ENCODE measurements at regions of chr15 and their contacts with region 1.

Region 1: DNA sequence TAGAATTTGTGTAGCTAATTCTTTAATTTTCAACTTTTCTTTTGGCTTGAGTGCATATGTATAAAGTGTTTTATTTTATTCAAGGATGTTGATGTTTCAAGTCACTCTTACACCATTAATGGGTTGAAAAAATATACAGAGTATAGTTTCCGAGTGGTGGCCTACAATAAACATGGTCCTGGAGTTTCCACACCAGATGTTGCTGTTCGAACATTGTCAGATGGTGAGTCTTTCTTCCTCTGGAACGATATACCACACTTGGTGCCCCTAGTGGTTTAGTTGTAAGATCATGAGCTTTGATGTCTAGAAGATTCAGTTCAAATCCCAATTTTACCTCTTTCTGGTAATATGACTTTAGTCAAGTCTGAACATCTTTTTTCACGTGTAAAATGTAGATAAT is 119.3 kb downstream of the HCN4 start:
- DNase-seq: no peak
- ATAC-seq: no peak
- H3K4me3 Mint-ChIP-seq: no peak overlapping the region
- H3K27ac Mint-ChIP-seq: no peak overlapping the region
- H3K4me1 Mint-ChIP-seq: no peaks in the 10 kb centered on the region
- H3K27me3 Mint-ChIP-seq: peaks cover 3% of the 10 kb centered on the region

Region 2: DNA sequence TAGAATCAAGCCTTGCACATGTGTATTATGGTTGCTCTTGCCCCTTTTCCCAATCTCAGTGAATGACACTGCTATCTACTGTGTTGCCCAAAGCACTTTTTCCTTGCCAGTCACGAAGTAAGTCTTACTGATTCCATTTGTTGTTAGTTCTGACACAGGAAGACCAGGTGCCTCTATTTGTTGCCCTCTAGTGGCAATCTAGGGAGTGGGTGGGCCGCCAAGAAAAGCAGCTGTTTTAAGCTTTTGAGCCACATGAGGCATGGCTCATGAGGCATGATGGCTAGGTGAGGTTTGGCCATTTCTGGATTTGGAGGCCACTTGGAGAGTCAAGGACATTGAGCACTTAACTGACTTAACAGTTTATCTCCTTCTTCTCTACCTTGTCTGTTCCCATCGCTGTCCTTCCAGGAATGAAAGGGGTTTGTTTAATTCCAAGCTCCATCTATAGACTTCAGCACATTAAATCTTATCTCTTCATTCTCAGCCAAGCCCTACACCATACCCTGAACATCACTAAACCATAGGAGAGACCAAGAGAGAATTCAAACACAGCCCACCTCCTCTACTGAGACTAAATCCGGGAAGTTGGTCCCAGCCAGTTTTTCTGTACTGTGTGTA is 16.1 kb after region 1 on chr15:
- CTCF ChIA-PET with region 1: interaction called, 110 read pairs
- DNase-seq: peak; percentile 74
- ATAC-seq: peak; percentile 75
- H3K4me3 Mint-ChIP-seq: no peak overlapping the region
- H3K27ac Mint-ChIP-seq: no peak overlapping the region
- H3K4me1 Mint-ChIP-seq: no peaks in the 10 kb centered on the region
- H3K27me3 Mint-ChIP-seq: no peaks in the 10 kb centered on the region

Region 3: DNA sequence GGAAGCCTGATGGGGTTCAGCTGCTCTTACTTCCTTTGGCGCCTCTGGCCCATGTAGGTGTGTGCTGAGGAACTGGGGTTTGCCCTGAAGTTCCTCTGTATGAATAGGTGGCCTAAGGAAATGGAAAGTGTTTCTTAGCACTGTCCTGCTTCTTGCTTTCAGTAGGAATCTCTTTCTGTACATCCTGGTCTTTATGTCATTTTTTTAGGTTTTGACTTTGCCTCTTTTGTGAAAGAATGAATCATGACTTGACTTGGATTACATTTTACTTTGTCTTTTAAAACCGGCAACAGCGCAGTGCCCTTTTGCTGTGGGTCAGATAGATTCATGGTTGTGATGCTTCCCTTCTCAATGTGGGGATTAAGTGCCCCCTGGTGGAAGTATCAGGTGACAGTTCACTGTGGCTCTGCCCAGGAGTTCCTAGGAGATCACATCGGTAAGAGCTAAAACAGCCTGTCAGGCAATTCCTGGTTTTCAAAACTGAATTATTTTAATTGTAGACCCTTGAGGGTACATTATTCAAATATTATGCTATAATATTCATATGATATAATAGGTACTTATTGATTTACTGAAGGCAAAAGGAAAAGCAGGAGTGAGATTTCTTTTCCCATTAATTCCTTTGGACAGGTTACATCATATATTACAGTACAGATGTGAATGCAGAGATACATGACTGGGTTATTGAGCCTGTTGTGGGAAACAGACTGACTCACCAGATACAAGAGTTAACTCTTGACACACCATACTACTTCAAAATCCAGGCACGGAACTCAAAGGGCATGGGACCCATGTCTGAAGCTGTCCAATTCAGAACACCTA is 23.9 kb after region 1 on chr15:
- CTCF ChIA-PET with region 1: interaction called, 110 read pairs
- DNase-seq: peak; percentile 70
- ATAC-seq: peak; percentile 76
- H3K4me3 Mint-ChIP-seq: no peak overlapping the region
- H3K27ac Mint-ChIP-seq: no peak overlapping the region
- H3K4me1 Mint-ChIP-seq: peaks cover 2% of the 10 kb centered on the region
- H3K27me3 Mint-ChIP-seq: no peaks in the 10 kb centered on the region

Region 4: GRCh38 chr15:73885954-73886700 is 636.6 kb after region 1 on chr15:
- CTCF ChIA-PET with region 1: no interaction called
- DNase-seq: no peak
- ATAC-seq: no peak
- H3K4me3 Mint-ChIP-seq: no peak overlapping the region
- H3K27ac Mint-ChIP-seq: no peak overlapping the region
- H3K4me1 Mint-ChIP-seq: no peaks in the 10 kb centered on the region
- H3K27me3 Mint-ChIP-seq: peaks cover 23% of the 10 kb centered on the region

Measured in activated CD8-positive, alpha-beta memory T cell treated with anti-CD3 and anti-CD28 coated beads, Interleukin-2, amount 10 ng/mL, durations not matched to agents 7 days and 5 days (primary cell).